Caco-2 (cell line): ENCODE measurements at regions of chr6 and their contacts with region 1.

Region 1: GRCh38 chr6:103273048-103273447 is 1586.7 kb downstream of the HACE1 start:
- DNase-seq: peak in 1 of 2 experiments; percentile 53
- H3K4me3 ChIP-seq: no peak overlapping the region
- H3K4me3 Mint-ChIP-seq: no peak overlapping the region
- H3K27ac Mint-ChIP-seq: no peak overlapping the region
- H3K4me1 ChIP-seq: no peaks in the 10 kb centered on the region
- H3K4me1 Mint-ChIP-seq: no peaks in the 10 kb centered on the region
- H3K27me3 ChIP-seq: no peaks in the 10 kb centered on the region
- H3K27me3 Mint-ChIP-seq: no peaks in the 10 kb centered on the region
- CTCF ChIP-seq: peak; percentile 27 to 62

Region 2: DNA sequence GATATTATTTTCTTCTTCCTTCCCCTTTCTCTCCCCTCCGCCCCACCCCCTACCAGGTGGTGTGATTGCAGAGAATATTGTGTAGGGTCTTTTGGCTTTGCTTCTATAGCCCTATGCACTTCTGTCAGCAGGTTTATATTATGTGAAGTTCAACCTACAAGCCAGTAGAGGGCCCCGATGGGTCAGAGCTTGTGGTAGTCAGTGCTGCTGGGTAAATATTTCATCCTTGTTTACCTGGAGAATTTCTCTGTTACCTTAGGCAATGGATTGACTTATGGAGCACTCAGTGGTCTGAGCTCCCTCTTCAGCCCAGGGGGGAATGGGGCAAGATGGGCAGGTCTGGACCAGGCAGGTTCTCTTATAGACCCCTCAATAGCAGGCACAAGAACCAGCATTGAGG is 1158.6 kb before region 1 on chr6:
- CTCF ChIA-PET with region 1: no interaction called
- POLR2A ChIA-PET with region 1: no interaction called
- intact Hi-C with region 1: loop called (anchors 2 kb)
- DNase-seq: peak in 1 of 2 experiments; percentile 27
- H3K4me3 ChIP-seq: no peak overlapping the region
- H3K4me3 Mint-ChIP-seq: no peak overlapping the region
- H3K27ac Mint-ChIP-seq: no peak overlapping the region
- H3K4me1 ChIP-seq: no peaks in the 10 kb centered on the region
- H3K4me1 Mint-ChIP-seq: no peaks in the 10 kb centered on the region
- H3K27me3 ChIP-seq: no peaks in the 10 kb centered on the region
- H3K27me3 Mint-ChIP-seq: no peaks in the 10 kb centered on the region
- CTCF ChIP-seq: peak in 1 of 2 experiments; percentile 37

Region 3: GRCh38 chr6:102798631-102799030 is 474.4 kb before region 1 on chr6:
- CTCF ChIA-PET with region 1: no interaction called
- POLR2A ChIA-PET with region 1: no interaction called
- intact Hi-C with region 1: no loop called
- DNase-seq: no peak
- H3K4me3 ChIP-seq: no peak overlapping the region
- H3K4me3 Mint-ChIP-seq: no peak overlapping the region
- H3K27ac Mint-ChIP-seq: no peak overlapping the region
- H3K4me1 ChIP-seq: peaks cover 9% of the 10 kb centered on the region
- H3K4me1 Mint-ChIP-seq: peaks cover 7% of the 10 kb centered on the region
- H3K27me3 ChIP-seq: no peaks in the 10 kb centered on the region
- H3K27me3 Mint-ChIP-seq: no peaks in the 10 kb centered on the region
- CTCF ChIP-seq: no peak

Region 4: DNA sequence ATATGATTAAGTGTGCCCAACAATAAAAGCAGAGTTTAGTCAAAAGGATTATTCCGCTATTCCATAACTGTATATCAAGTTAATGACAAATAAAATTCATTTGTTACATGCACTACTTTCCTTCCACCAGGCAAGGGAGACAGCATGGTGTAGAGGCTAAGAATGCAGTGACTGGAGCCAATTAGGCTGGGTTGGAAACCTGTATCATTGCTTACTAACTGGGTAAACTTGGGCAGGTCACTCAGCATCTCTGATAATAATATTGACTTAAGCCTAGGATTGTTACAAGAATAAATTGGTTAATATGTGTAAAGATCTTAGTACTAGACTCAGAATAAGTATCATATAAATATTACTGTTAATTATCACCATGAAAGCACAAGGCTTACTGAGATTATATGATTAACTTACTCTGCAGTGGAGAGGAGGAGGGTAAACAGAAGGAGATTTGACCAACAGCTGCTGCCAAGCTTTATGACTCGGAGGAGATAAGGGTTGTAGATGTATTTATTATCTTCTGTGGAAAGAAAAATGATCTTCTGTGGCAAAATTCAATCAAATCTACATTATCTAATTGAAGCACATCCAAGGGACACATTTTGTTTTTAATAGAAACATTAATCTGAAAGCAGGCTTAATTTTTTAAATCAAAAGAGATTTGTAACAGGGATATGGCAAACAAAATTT is 419.6 kb before region 1 on chr6:
- CTCF ChIA-PET with region 1: no interaction called
- POLR2A ChIA-PET with region 1: no interaction called
- intact Hi-C with region 1: loop called (anchors 1 kb)
- DNase-seq: peak; percentile 50 to 57
- H3K4me3 ChIP-seq: no peak overlapping the region
- H3K4me3 Mint-ChIP-seq: no peak overlapping the region
- H3K27ac Mint-ChIP-seq: no peak overlapping the region
- H3K4me1 ChIP-seq: peaks cover 7% of the 10 kb centered on the region
- H3K4me1 Mint-ChIP-seq: peaks cover 13% of the 10 kb centered on the region
- H3K27me3 ChIP-seq: no peaks in the 10 kb centered on the region
- H3K27me3 Mint-ChIP-seq: no peaks in the 10 kb centered on the region
- CTCF ChIP-seq: no peak